Left ventricle myocardium inferior (tissue), 1 donor: ENCODE measurements at regions of chr12 and their contacts with region 1.

Region 1: GRCh38 chr12:107685360-107686248 is at the start of gene PWP1:
- DNase-seq: peak; percentile 94
- H3K4me3 ChIP-seq: peak within 1 kb of the TSS; percentile 97
- H3K27ac ChIP-seq: peak within 1 kb of the TSS; percentile 84
- H3K4me1 ChIP-seq: peaks cover 32% of the 10 kb centered on the region
- H3K27me3 ChIP-seq: peaks cover 11% of the 10 kb centered on the region
- CTCF ChIP-seq: no peak
- total RNA-seq, gene PWP1: 11.7 TPM

Region 2: GRCh38 chr12:107759410-107759809 is 73.8 kb after region 1 on chr12:
- intact Hi-C with region 1: loop called (anchors 5 kb)
- DNase-seq: no peak
- H3K4me3 ChIP-seq: peak overlapping the region; percentile 96
- H3K27ac ChIP-seq: peak overlapping the region; percentile 84
- H3K4me1 ChIP-seq: peaks cover 37% of the 10 kb centered on the region
- H3K27me3 ChIP-seq: no peaks in the 10 kb centered on the region
- CTCF ChIP-seq: no peak